Gastrocnemius medialis (tissue), 4 donors: ENCODE measurements at regions of chrX and their contacts with region 1.

Region 1: GRCh38 chrX:18855919-18856644 is 127.8 kb downstream of the PHKA2 start:
- DNase-seq: no peak
- ATAC-seq: no peak
- H3K4me3 ChIP-seq: no peak overlapping the region
- H3K27ac ChIP-seq: no peak overlapping the region
- H3K4me1 ChIP-seq: no peaks in the 10 kb centered on the region
- H3K27me3 ChIP-seq: no peaks in the 10 kb centered on the region
- CTCF ChIP-seq: no peak
- POLR2A ChIP-seq: no peak

Region 2: DNA sequence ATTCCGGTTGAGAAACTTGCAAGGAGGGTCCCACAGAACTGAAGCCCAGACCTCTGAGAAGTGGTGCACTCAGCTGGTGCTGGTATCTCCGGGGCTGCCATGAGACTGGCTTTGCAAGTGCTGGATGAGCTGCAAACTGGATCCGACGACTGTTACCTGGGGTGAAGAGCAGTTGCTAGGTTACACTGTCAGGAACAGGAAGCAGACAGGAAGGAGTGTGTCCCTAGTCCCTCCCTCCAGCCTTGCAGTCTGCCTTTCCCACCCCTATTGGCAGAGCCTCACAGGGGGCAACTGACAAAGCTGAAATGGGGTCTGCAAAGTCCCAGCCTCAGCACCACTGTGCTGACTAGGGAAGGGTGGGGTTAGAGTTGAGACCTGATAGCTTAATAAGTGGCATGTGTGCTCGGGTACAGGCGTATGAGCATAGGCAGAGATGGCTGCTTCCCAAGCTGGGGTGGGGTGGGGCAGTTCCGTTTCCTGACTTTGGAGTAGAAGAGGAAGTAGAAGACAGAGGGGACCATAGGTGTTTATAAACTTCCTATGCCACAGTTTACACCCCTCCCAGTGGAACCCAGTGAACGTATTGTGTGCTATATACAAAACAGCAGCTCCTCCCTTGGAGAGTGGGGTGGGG is 130.7 kb before region 1 on chrX:
- in situ Hi-C with region 1: no loop called
- intact Hi-C with region 1: no loop called
- DNase-seq: no peak
- ATAC-seq: no peak
- H3K4me3 ChIP-seq: no peak overlapping the region
- H3K27ac ChIP-seq: no peak overlapping the region
- H3K4me1 ChIP-seq: no peaks in the 10 kb centered on the region
- H3K27me3 ChIP-seq: no peaks in the 10 kb centered on the region
- CTCF ChIP-seq: no peak
- POLR2A ChIP-seq: no peak

Region 3: GRCh38 chrX:18769812-18770573 is 86.1 kb before region 1 on chrX:
- in situ Hi-C with region 1: loop called in 1 of 4 experiments (anchors 25 kb)
- intact Hi-C with region 1: no loop called
- DNase-seq: no peak
- ATAC-seq: no peak
- H3K4me3 ChIP-seq: no peak overlapping the region
- H3K27ac ChIP-seq: no peak overlapping the region
- H3K4me1 ChIP-seq: no peaks in the 10 kb centered on the region
- H3K27me3 ChIP-seq: no peaks in the 10 kb centered on the region
- CTCF ChIP-seq: no peak
- POLR2A ChIP-seq: no peak